Activated CD8-positive, alpha-beta T cell treated with anti-CD3 and anti-CD28 coated beads for 36 hours (primary cell): ENCODE measurements at regions of chr22 and their contacts with region 1.

Region 1: GRCh38 chr22:38953577-38954413 is 3.6 kb upstream of the APOBEC3A start:
- DNase-seq: peak; percentile 89
- ATAC-seq: peak; percentile 93
- H3K4me3 Mint-ChIP-seq: peak overlapping the region; percentile 22
- H3K27ac Mint-ChIP-seq: peak overlapping the region; percentile 89
- H3K4me1 Mint-ChIP-seq: peaks cover 28% of the 10 kb centered on the region
- H3K27me3 Mint-ChIP-seq: peaks cover 9% of the 10 kb centered on the region
- CTCF ChIP-seq: no peak

Region 2: DNA sequence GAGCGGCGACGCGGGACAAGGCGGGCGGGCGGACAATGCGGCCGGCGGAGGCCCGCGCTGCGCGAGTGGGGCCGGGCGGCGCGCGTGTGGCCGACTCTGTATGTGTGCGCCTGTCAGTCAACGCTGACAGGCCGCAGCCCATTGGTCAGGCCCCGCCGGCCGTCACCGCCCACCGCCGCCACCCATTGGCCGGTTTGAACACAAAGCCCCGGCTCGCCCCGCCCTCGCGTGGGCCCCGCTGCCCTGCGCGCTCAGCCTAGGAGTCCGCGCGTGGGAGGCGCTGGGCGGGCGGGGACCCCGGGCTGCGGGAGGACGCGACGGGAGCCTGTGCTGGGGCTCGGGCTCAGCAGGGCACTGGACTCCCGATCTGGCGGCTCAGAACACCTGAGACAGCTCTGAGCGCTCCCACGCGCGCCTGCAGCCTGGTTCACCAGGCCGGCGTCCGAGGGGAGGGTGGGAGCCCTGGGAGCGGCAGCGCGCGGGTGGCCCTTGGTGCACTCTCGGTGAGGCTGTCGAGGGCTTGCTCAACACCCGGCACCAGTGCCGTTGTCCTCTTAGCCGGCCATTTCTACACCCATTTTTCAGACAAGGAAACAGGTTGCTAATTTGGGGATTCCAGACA is 197.8 kb before region 1 on chr22 and contains the start of gene SUN2:
- CTCF ChIA-PET with region 1: no interaction called
- POLR2A ChIA-PET with region 1: no interaction called
- intact Hi-C with region 1: no loop called
- DNase-seq: peak; percentile 95
- ATAC-seq: peak; percentile 73
- H3K4me3 Mint-ChIP-seq: peak within 1 kb of the TSS; percentile 87
- H3K27ac Mint-ChIP-seq: peak within 1 kb of the TSS; percentile 99
- H3K4me1 Mint-ChIP-seq: peaks cover 54% of the 10 kb centered on the region
- H3K27me3 Mint-ChIP-seq: no peaks in the 10 kb centered on the region
- CTCF ChIP-seq: no peak
- total RNA-seq, gene SUN2: 101 to 107 TPM

Region 3: GRCh38 chr22:38941488-38941987 is 12.3 kb before region 1 on chr22:
- CTCF ChIA-PET with region 1: interaction called, 10 read pairs
- POLR2A ChIA-PET with region 1: interaction called, 14 read pairs
- intact Hi-C with region 1: no loop called
- DNase-seq: peak; percentile 91
- ATAC-seq: peak; percentile 86
- H3K4me3 Mint-ChIP-seq: peak overlapping the region; percentile 43
- H3K27ac Mint-ChIP-seq: peak overlapping the region; percentile 85
- H3K4me1 Mint-ChIP-seq: peaks cover 31% of the 10 kb centered on the region
- H3K27me3 Mint-ChIP-seq: peaks cover 36% of the 10 kb centered on the region
- CTCF ChIP-seq: no peak

Region 4: DNA sequence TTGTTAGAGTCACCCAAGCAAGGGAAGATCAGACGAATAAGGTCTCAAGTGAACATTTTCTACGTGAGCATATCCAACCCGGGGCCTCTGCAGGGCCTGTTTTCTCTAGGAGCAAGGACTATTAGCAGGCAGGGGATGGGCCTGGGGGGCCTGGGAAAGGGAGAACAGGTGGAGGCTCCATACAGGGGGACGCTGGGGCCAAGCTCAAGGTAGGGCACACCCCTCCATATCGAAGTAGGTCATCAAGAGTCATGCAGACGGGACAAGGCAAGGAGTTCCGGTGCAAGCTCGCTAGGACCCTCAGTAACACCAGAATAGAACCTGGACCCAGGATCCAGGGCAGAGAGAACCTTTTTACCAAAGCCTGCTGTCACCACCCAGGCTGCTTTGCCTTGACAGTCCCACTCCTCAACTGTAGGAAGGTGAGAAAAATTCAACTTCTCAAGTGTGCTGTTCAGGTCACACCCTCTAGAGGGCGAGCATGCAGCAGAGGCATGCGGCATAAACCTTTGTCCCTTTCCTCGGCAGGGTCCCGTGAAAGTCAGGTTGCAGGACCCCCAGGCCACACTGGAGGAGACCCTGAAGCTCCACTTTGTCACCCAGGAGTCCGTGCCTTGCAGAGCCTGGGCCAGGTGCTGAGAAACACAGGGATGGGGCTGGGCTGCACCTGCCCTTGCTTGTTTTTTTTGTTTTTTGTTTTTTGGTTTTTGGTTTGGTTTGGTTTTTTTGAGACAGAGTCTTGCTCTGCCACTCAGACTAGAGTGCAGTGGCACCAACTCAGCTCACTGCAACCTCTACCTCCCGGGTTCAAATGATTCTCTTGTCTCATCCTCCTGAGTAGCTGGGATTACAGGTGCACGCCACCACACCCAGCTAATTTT is 19.7 kb after region 1 on chr22:
- CTCF ChIA-PET with region 1: interaction called, 10 read pairs
- POLR2A ChIA-PET with region 1: no interaction called
- intact Hi-C with region 1: no loop called
- DNase-seq: peak; percentile 77
- ATAC-seq: peak; percentile 97
- H3K4me3 Mint-ChIP-seq: no peak overlapping the region
- H3K27ac Mint-ChIP-seq: no peak overlapping the region
- H3K4me1 Mint-ChIP-seq: peaks cover 3% of the 10 kb centered on the region
- H3K27me3 Mint-ChIP-seq: peaks cover 17% of the 10 kb centered on the region
- CTCF ChIP-seq: peak; percentile 93